ENCODE measurements at regions of chr2 and their contacts with region 1.

Region 1: GRCh38 chr2:201320701-201321100 is 36.4 kb downstream of the FLACC1 start:
- DNase-seq: no peak
- H3K4me3 ChIP-seq: no peak overlapping the region
- H3K4me3 Mint-ChIP-seq: no peak overlapping the region
- H3K27ac Mint-ChIP-seq: no peak overlapping the region
- H3K4me1 ChIP-seq: no peaks in the 10 kb centered on the region
- H3K4me1 Mint-ChIP-seq: no peaks in the 10 kb centered on the region
- H3K27me3 ChIP-seq: no peaks in the 10 kb centered on the region; the same call in 1 of the 2 replicates
- H3K27me3 Mint-ChIP-seq: peaks cover 15% of the 10 kb centered on the region
- CTCF ChIP-seq: no peak

Region 2: GRCh38 chr2:201357241-201357640 is 36.5 kb after region 1 on chr2 and contains the start of gene FLACC1:
- CTCF ChIA-PET with region 1: no interaction called
- POLR2A ChIA-PET with region 1: no interaction called
- intact Hi-C with region 1: no loop called
- DNase-seq: peak; percentile 64 to 71
- H3K4me3 ChIP-seq: no peak within 1 kb of the TSS
- H3K4me3 Mint-ChIP-seq: no peak within 1 kb of the TSS
- H3K27ac Mint-ChIP-seq: peak within 1 kb of the TSS; percentile 40
- H3K4me1 ChIP-seq: peaks cover 11% of the 10 kb centered on the region
- H3K4me1 Mint-ChIP-seq: peaks cover 12% of the 10 kb centered on the region
- H3K27me3 ChIP-seq: no peaks in the 10 kb centered on the region
- H3K27me3 Mint-ChIP-seq: no peaks in the 10 kb centered on the region
- CTCF ChIP-seq: no peak
- total RNA-seq, gene FLACC1: 0.86 and 0.91 TPM in 2 replicates

Region 3: GRCh38 chr2:201949181-201949926 is 628.7 kb after region 1 on chr2:
- CTCF ChIA-PET with region 1: no interaction called
- POLR2A ChIA-PET with region 1: no interaction called
- intact Hi-C with region 1: loop called (anchors 10 kb)
- DNase-seq: no peak
- H3K4me3 ChIP-seq: no peak overlapping the region
- H3K4me3 Mint-ChIP-seq: no peak overlapping the region
- H3K27ac Mint-ChIP-seq: peak overlapping the region; percentile 64
- H3K4me1 ChIP-seq: peaks cover 6% of the 10 kb centered on the region
- H3K4me1 Mint-ChIP-seq: peaks cover 14% of the 10 kb centered on the region
- H3K27me3 ChIP-seq: no peaks in the 10 kb centered on the region
- H3K27me3 Mint-ChIP-seq: no peaks in the 10 kb centered on the region
- CTCF ChIP-seq: no peak

Measured in Caco-2 (cell line).